ENCODE measurements at regions of chr9 and their contacts with region 1.

Region 1: GRCh38 chr9:124537926-124538325 is 30.7 kb upstream of the NR5A1 start:
- H3K4me3 ChIP-seq: no peak overlapping the region
- H3K27ac ChIP-seq: no peak overlapping the region
- H3K4me1 ChIP-seq: no peaks in the 10 kb centered on the region
- CTCF ChIP-seq: no peak

Region 2: DNA sequence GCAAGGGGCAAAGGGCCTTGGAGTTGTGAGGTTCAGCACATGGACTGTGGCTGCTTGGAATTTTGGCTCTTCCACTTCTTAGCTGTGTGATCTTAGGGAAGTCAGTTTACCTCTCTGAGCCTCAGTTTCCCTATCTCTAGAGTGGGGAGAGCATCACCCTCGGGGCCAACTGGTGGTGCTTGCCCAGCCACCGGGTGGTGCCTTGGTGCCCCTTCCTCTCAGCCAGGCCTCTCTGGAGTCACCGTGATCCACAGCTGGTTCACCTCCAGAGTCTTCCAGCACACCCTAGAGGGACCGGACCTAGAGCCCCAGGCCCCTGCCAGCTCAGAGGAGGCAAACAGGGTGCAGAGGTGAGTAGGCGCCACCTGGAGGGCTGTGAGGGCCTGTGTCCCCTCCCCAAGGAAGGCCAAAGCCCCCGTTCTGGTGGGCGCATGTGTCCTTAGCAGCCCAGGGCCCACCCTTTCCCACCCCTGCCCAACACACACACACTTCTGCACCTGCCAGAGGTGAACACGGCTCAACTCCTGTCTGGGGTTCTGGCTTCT is 80.0 kb before region 1 on chr9:
- CTCF ChIA-PET with region 1: no interaction called
- POLR2A ChIA-PET with region 1: no interaction called
- H3K4me3 ChIP-seq: no peak overlapping the region
- H3K27ac ChIP-seq: no peak overlapping the region
- H3K4me1 ChIP-seq: no peaks in the 10 kb centered on the region
- CTCF ChIP-seq: no peak

Region 3: DNA sequence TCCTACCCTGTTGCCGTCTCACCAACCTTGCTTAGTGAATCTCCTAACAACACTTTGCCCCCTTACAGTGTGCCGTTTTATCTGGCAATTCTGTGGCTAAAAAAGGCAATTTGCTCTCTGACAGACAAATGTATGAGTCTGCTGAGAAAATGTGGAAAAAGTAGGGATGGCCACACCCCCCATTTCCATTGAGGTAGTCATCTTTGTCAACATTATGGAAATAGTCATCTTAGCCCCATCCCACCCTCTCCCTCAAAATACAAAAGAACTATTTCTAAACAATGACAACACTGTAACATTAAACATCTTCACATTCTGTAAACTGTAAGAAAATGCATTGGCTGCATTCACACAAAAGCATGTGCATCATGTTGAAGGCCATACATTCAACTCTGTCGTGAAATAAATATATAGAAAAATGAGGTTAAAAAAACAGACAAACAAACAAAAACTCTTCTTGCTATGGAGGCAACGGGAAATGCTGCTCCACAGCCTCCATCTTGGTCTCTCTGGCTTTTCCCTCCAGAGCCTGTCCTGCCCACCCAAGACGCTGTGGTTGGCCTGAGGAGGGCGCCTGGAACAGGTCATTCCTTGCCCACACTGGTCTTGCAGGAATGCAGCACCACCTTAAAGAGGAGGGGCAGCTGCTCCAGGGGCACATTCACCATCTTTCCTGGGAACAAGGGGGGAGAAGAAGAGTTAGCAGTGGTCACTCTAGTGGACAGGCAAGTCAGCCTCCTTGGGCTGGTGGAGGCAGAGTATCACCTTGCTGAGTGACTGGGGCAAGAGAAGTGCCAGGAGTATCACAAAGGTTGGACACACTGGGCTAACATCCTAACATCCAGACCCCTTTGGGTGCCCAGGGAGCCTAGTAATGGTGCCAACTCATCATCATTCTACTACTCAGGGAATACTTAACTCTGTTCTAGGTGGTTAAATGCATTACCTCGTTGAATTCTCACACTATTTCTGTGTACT is 15.5 kb before region 1 on chr9:
- CTCF ChIA-PET with region 1: interaction called, 26 read pairs
- POLR2A ChIA-PET with region 1: no interaction called
- H3K4me3 ChIP-seq: no peak overlapping the region
- H3K27ac ChIP-seq: no peak overlapping the region
- H3K4me1 ChIP-seq: no peaks in the 10 kb centered on the region
- CTCF ChIP-seq: no peak

Region 4: GRCh38 chr9:124527781-124528180 is 10.1 kb before region 1 on chr9:
- CTCF ChIA-PET with region 1: interaction called, 26 read pairs
- POLR2A ChIA-PET with region 1: no interaction called
- H3K4me3 ChIP-seq: no peak overlapping the region
- H3K27ac ChIP-seq: no peak overlapping the region
- H3K4me1 ChIP-seq: no peaks in the 10 kb centered on the region
- CTCF ChIP-seq: no peak